Ovary (tissue), 10 donors: ENCODE measurements at regions of chr12 and their contacts with region 1.

Region 1: GRCh38 chr12:546921-547845 is 87.4 kb downstream of the B4GALNT3 start:
- DNase-seq: peak; percentile 26 to 79 (median 67)
- H3K4me3 ChIP-seq: no peak overlapping the region
- H3K27ac ChIP-seq: no peak overlapping the region
- H3K4me1 ChIP-seq: peaks cover 6% of the 10 kb centered on the region
- H3K27me3 ChIP-seq: no peaks in the 10 kb centered on the region
- CTCF ChIP-seq: peak; percentile 73 to 92 (median 85)
- EP300 ChIP-seq: no peak
- POLR2A ChIP-seq: no peak

Region 2: DNA sequence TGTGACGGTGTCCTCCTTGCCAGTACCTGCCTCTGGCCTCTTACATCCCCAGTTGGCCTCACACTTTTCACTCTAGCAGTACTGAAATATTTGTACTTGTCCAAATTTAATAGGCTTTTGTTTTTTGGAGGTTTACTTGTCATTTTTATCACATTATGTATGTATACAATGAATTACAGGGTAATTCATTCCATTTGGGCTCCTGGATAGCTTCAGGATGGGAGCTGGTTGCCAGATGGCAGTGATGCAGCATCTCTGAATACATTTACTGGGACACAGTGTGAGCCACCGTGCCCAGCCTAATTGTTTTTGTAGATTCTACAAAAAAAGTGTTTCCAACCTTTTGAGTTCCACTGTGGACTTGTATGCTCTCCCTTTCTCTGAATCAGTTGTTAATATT is 132.3 kb before region 1 on chr12:
- intact Hi-C with region 1: no loop called
- DNase-seq: no peak
- H3K4me3 ChIP-seq: no peak overlapping the region
- H3K27ac ChIP-seq: no peak overlapping the region
- H3K4me1 ChIP-seq: no peaks in the 10 kb centered on the region
- H3K27me3 ChIP-seq: no peaks in the 10 kb centered on the region
- CTCF ChIP-seq: no peak
- EP300 ChIP-seq: no peak
- POLR2A ChIP-seq: no peak

Region 3: GRCh38 chr12:442235-442884 is 104.8 kb before region 1 on chr12:
- intact Hi-C with region 1: loop called in 1 of 4 experiments (anchors 5 kb)
- DNase-seq: peak in 4 of 5 donors; percentile 12 to 49 (median 34)
- H3K4me3 ChIP-seq: no peak overlapping the region
- H3K27ac ChIP-seq: no peak overlapping the region
- H3K4me1 ChIP-seq: no peaks in the 10 kb centered on the region
- H3K27me3 ChIP-seq: no peaks in the 10 kb centered on the region
- CTCF ChIP-seq: peak; percentile 16 to 52 (median 35)
- EP300 ChIP-seq: no peak
- POLR2A ChIP-seq: no peak

Region 4: GRCh38 chr12:452667-453210 is 94.4 kb before region 1 on chr12:
- intact Hi-C with region 1: loop called (anchors 5 kb)
- DNase-seq: no peak
- H3K4me3 ChIP-seq: no peak overlapping the region
- H3K27ac ChIP-seq: no peak overlapping the region
- H3K4me1 ChIP-seq: no peaks in the 10 kb centered on the region
- H3K27me3 ChIP-seq: no peaks in the 10 kb centered on the region
- CTCF ChIP-seq: no peak
- EP300 ChIP-seq: no peak
- POLR2A ChIP-seq: no peak

Region 5: DNA sequence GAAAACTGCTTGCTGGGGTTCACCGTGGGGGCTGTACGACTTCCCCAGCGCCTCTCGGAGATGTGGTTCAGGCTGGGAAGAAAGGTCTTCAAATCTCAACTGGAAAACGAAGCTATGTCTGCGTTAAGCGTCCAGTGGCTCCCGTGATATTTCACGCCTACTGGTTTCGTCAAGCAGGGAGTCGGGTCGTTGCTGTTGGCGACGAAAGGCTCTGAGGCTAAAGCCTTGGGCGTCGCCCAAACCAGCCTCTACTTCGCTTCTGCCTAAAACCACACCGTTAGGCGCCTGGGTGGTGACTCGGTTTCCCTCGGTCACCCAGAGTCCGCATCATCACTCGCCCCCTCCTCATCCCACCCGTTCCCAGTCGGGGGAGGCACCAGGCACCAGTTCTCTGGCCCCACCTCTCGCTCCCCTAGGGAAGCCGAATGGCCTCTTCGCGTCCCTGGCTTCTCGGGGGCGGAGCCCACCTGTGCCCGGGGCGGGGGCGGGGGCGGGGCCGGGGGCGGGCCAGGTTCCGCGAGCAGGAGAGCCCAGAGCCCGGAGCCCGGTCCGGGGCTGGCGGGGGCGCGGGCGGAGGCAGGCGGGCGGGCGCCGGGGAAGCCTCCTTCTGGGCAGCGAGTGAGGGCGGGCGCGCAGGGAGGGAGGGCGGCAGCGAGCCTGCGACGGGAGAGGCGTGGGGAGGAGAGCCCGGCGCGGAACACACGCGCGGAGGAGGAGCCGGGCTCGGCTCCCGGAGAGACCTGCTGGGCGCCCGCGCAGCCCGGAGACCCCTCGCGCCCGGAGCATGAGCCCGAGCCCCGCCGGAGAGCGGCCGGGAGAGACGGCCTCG is 87.5 kb before region 1 on chr12 and contains the start of gene B4GALNT3:
- intact Hi-C with region 1: loop called (anchors 5 kb)
- DNase-seq: peak; percentile 18 to 67 (median 45)
- H3K4me3 ChIP-seq: peak within 1 kb of the TSS; percentile 49
- H3K27ac ChIP-seq: no peak within 1 kb of the TSS
- H3K4me1 ChIP-seq: peaks cover 2% of the 10 kb centered on the region
- H3K27me3 ChIP-seq: no peaks in the 10 kb centered on the region
- CTCF ChIP-seq: no peak
- EP300 ChIP-seq: no peak
- POLR2A ChIP-seq: no peak
- total RNA-seq, gene B4GALNT3: 0.61 to 4.2 (median 1.8) TPM